K562 (cell line): ENCODE measurements at regions of chr15 and their contacts with region 1.

Region 1: DNA sequence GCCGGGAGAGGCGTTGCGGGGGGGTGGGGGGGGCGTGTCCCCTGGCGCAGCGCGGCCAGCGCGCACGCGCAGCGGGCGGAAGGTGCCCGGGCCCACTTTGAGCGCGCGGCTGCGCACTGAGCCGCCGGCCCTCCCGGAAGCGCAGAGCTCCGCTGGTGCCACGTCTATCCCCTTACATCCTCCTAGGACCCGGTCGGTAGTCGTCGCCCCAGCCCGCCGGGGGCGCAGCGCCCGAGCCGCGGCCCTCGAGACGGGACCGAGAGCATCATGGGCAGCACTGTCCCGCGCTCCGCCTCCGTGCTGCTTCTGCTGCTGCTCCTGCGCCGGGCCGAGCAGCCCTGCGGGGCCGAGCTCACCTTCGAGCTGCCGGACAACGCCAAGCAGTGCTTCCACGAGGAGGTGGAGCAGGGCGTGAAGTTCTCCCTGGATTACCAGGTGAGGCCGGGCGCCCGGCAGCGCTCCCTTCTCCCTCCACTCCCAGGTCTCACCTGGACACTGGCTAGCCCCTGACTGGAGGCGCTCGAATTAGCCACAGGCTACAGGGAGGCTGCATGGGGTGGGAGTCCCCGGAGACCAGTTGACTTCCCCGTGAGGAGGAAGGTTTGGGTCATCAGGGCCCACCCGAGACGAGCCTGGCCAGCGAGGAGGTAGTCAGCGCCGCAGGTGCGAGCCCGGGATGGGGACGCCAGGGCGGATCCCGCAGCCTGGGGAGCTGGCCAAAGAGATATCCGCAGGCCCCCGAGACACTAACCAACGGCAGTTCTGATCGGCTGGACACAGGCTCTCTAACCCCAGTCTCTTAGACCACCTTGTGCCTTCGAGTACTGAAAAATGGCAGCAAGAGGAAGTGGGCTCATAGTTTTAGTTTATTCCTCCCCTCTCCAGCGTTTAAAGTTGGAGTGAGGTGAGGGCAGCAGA is at the start of gene TMED3:
- DNase-seq: peak; percentile 91 to 98 (median 98)
- ATAC-seq: peak; percentile 97
- H3K4me3 ChIP-seq: peak within 1 kb of the TSS; percentile 93
- H3K27ac ChIP-seq: peak within 1 kb of the TSS; percentile 71
- H3K4me1 ChIP-seq: peaks cover 9 to 10% of the 10 kb centered on the region in 2 experiments; a peak in 4 of 5 replicates
- H3K27me3 ChIP-seq: peaks cover 0 to 5% of the 10 kb centered on the region in 2 experiments; a peak in 2 of 5 replicates
- CTCF ChIP-seq: peak; percentile 39 to 54 (median 41); a peak in 5 of 6 replicates
- EP300 ChIP-seq: no peak
- POLR2A ChIP-seq: peak; percentile 79
- RAD21 ChIP-seq: no peak
- polyA plus RNA-seq, gene TMED3: 6.1 to 12.5 TPM

Region 2: DNA sequence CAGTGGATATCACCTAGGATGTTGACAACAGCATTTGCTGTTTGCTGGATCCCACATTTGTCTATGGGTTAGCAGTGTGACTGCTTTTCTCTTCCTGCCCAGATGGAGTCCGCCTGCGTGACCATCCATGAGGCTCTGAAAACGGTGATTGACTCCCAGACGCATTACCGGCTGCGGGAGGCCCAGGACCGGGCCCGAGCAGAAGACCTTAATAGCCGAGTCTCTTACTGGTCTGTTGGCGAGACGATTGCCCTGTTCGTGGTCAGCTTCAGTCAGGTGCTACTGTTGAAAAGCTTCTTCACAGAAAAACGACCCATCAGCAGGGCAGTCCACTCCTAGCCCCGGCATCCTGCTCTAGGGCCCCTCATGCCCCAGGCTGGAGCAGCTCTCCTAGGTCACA is 10.6 kb after region 1 on chr15:
- CTCF ChIA-PET with region 1: no interaction called
- POLR2A ChIA-PET with region 1: interaction called, 11 read pairs
- in situ Hi-C with region 1: no loop called
- intact Hi-C with region 1: no loop called
- DNase-seq: no peak
- ATAC-seq: no peak
- H3K4me3 ChIP-seq: no peak overlapping the region
- H3K27ac ChIP-seq: no peak overlapping the region
- H3K4me1 ChIP-seq: no peaks in the 10 kb centered on the region
- H3K27me3 ChIP-seq: no peaks in the 10 kb centered on the region
- CTCF ChIP-seq: no peak
- EP300 ChIP-seq: no peak
- POLR2A ChIP-seq: no peak
- RAD21 ChIP-seq: no peak